ENCODE measurements at regions of chr6 and their contacts with region 1.

Region 1: GRCh38 chr6:169723200-169723909 is 945 bp downstream of the PHF10 start:
- DNase-seq: peak; percentile 87 to 91
- ATAC-seq: peak; percentile 75 to 83 (median 76)
- H3K4me3 ChIP-seq: peak overlapping the region; percentile 74
- H3K27ac ChIP-seq: peak overlapping the region; percentile 86
- H3K4me1 ChIP-seq: peaks cover 31% of the 10 kb centered on the region
- H3K27me3 ChIP-seq: no peaks in the 10 kb centered on the region
- CTCF ChIP-seq: peak; percentile 1

Region 2: GRCh38 chr6:169701954-169702839 is 21.2 kb before region 1 on chr6 and contains the starts of genes C6orf120 and WDR27:
- intact Hi-C with region 1: loop called (anchors 2 kb)
- DNase-seq: peak; percentile 98 to 99
- ATAC-seq: peak; percentile 96 to 97 (median 96)
- H3K4me3 ChIP-seq: peak within 1 kb of the TSS; percentile 90
- H3K27ac ChIP-seq: peak within 1 kb of the TSS; percentile 99
- H3K4me1 ChIP-seq: peaks cover 37% of the 10 kb centered on the region
- H3K27me3 ChIP-seq: no peaks in the 10 kb centered on the region
- CTCF ChIP-seq: no peak
- total RNA-seq, gene C6orf120: 16.5 to 23.6 (median 20.0) TPM
- total RNA-seq, gene WDR27: 4.7 to 14.4 (median 5.8) TPM

Region 3: DNA sequence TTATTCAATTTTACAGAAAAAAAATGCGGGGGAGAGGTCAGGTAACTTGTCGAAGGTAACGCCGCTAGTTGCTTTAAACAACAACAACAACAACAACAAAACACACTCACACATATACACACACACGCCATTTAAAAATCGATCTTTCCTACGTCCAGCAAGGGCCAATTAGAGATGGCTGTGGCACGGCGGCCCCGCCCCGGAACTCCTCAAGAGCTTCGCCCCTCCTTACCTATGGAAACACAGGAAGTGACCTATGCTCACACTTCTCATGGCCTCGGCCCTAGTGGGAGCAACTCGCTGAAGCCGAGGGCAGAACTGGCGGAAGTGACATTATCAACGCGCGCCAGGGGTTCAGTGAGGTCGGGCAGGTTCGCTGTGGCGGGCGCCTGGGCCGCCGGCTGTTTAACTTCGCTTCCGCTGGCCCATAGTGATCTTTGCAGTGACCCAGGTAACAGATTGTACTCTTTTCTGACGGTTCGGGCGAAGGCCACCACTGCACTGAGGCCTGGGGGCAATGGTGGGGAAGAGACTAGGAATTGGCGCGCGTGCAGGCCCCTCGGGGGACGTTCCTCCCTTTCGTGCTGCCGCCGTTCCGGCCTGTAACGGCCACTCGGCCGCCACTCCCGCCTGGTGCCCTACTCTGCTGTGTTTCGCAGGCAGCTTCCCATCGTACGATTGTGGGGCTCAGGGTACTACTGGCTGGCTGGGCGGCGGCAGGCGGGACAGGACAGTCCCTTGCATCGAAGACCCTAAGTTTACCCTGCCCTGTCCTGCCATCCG is 830.8 kb after region 1 on chr6 and contains the start of gene TBP:
- intact Hi-C with region 1: loop called in 1 of 2 experiments (anchors 10 kb)
- DNase-seq: peak; percentile 97 to 99
- ATAC-seq: peak; percentile 91 to 96 (median 94)
- H3K4me3 ChIP-seq: peak within 1 kb of the TSS; percentile 74
- H3K27ac ChIP-seq: peak within 1 kb of the TSS; percentile 98
- H3K4me1 ChIP-seq: peaks cover 43% of the 10 kb centered on the region
- H3K27me3 ChIP-seq: no peaks in the 10 kb centered on the region
- CTCF ChIP-seq: no peak
- total RNA-seq, gene TBP: 6.9 to 12.0 (median 8.0) TPM

Measured in psoas muscle (tissue), 8 donors.